ENCODE measurements at regions of chr12 and their contacts with region 1.

Region 1: DNA sequence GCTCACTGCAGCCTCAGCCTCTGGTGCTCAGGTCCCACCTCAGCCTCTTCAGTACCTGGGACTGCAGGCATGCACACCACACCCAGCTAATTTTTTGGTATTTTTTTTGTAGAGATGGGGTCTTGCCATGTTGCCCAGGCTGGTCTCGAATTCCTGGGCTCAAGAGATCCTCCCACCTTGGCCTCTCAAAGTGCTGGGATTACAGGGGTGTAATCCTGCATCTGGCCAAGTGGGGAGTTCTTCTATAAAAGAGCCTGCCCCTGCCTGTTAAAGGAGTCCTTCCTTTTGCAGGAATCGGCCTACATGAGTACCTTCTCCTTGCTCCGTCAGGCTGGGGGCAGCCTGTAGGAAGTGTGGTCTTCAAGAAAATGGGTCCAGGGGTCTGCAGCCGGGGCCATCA is 54.1 kb upstream of the RASSF3 start:
- H3K4me3 Mint-ChIP-seq: no peak overlapping the region
- H3K27ac Mint-ChIP-seq: no peak overlapping the region
- H3K4me1 Mint-ChIP-seq: peaks cover 11% of the 10 kb centered on the region
- H3K27me3 Mint-ChIP-seq: peaks cover 1% of the 10 kb centered on the region

Region 2: DNA sequence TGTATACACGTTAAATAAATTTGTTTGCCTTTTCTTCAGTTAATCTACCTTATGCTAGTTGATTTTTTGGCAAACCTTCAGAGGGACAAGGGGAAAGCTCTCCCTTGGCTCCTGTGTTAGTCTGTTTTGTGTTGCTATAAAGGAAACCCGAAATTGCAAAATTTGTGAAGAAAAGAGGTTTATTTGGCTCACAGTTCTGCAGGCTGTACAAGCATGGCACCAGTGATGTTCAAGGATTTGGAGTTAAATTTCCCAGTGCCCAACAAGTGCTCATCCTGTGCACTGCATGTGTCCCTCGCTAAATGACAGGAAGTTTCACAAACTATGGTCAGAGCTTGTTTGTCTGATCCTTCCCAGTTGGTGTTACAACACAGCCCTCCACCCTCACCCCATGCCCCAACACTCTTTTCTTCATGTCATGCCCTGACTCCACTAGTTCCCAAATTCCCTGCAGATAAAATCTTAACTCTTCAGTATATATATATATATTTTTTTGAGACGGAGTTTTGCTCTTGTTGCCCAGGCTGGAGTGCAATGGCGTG is 40.1 kb after region 1 on chr12:
- intact Hi-C with region 1: loop called (anchors 5 kb)
- H3K4me3 Mint-ChIP-seq: no peak overlapping the region
- H3K27ac Mint-ChIP-seq: peak overlapping the region; percentile 77
- H3K4me1 Mint-ChIP-seq: peaks cover 48% of the 10 kb centered on the region
- H3K27me3 Mint-ChIP-seq: no peaks in the 10 kb centered on the region

Region 3: DNA sequence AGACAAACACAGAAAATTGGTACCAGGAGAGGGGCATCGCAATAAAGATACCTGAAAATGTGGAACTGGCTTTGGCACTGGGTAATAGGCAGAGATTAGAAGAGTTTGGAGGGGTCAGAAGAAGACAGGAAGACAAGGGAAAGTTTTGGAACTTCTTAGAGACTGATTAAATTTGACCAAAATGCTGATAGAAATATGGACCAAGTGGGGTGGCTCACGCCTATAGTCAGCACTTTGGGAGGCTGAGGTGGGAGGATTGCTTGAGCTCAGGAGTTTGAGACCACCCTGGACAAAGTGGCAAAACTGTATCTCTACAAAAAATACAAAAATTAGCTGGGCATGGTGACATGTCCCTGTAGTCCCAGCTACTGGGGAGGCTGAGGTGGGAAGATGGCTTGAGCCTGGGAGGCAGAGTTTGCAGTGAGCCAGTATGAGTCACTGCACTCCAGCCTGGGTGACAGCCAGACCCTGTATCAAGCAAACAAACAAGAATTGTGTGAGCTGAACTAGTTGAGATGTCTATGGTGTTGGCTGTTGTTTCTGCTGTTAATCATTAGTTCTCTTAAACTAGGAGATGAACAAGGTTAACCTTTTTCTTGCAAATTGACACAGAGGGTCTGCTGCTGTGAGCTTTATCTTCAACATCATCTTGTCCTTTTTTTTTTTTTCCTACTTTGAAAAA is 77.6 kb after region 1 on chr12:
- intact Hi-C with region 1: no loop called
- H3K4me3 Mint-ChIP-seq: no peak overlapping the region
- H3K27ac Mint-ChIP-seq: peak overlapping the region; percentile 65
- H3K4me1 Mint-ChIP-seq: peaks cover 67% of the 10 kb centered on the region
- H3K27me3 Mint-ChIP-seq: no peaks in the 10 kb centered on the region

Measured in dendritic cell treated with granulocyte-macrophage colony-stimulating factor and Interleukin-4, amounts not matched to agents 40 ng/mL and 50 ng/mL, for 4 days (primary cell).